ENCODE measurements at regions of chr9 and their contacts with region 1.

Region 1: DNA sequence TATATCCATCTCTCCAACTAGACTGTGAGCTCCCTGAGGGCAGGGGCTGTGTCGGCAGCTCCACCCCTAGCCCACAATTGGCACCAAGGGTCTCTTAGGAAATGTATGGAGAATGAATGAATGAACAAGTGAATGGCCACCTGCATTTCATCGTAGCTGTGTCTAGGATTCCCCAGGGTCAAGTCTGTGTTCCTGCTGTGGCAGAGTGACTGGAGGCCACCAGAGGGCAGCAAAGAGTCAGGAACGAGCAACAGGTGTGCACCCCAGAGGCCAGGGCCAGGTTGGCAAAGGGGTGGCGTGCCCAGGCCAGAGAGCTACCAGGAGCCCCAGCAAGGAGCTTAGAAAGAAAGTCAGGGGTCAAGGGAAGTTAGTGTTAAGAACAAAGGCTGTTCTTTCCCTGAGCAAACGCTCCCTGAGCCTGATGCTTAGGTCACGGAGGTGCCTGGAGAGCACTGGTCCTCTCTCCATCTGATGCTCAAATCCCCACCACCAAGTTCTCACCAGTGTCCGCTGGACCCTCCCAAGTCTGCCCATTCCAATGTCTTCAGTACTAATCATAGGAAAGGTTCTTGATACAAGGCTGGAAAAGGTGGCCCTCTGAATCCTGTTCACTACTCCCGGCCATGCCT is 160.7 kb downstream of the PAX5 start:
- DNase-seq: peak; percentile 84
- CTCF ChIP-seq: peak; percentile 93

Region 2: GRCh38 chr9:36676778-36677485 is 196.4 kb before region 1 on chr9:
- CTCF ChIA-PET with region 1: no interaction called
- POLR2A ChIA-PET with region 1: no interaction called
- DNase-seq: no peak
- CTCF ChIP-seq: no peak

Region 3: GRCh38 chr9:36855448-36856315 is 17.7 kb before region 1 on chr9:
- CTCF ChIA-PET with region 1: interaction called, 64 read pairs
- POLR2A ChIA-PET with region 1: no interaction called
- DNase-seq: peak; percentile 67
- CTCF ChIP-seq: peak; percentile 17

Region 4: GRCh38 chr9:36888551-36888950 is 15.2 kb after region 1 on chr9:
- CTCF ChIA-PET with region 1: interaction called, 29 read pairs
- POLR2A ChIA-PET with region 1: no interaction called
- DNase-seq: no peak
- CTCF ChIP-seq: no peak

Region 5: GRCh38 chr9:36937346-36937745 is 64.0 kb after region 1 on chr9:
- CTCF ChIA-PET with region 1: interaction called, 11 read pairs
- POLR2A ChIA-PET with region 1: no interaction called
- DNase-seq: no peak
- CTCF ChIP-seq: no peak

Region 6: GRCh38 chr9:36969216-36969771 is 95.9 kb after region 1 on chr9:
- CTCF ChIA-PET with region 1: interaction called, 10 read pairs
- POLR2A ChIA-PET with region 1: no interaction called
- DNase-seq: no peak
- CTCF ChIP-seq: no peak

Region 7: DNA sequence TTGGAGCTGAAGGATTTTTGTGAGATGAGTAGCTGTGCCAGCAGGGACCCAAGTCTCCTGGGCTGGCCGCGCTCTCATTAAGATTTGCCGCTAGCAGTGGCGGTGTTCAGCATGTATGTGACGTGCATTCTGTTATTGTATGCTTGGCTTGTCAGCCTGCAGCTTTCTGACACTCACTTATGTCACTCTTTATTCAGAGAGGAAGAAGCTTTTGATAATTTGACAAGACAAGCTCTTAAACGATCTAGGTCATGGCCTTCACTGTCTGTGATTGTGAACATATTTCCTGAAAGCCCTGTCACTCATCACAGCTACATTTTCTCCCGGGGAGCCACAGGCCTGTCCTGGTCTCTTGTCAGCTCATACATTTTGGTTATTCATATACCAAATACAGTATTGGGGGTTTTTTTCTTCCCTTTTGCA is 450.9 kb after region 1 on chr9:
- CTCF ChIA-PET with region 1: interaction called, 25 read pairs
- POLR2A ChIA-PET with region 1: no interaction called
- DNase-seq: peak; percentile 29
- CTCF ChIP-seq: no peak

Region 8: DNA sequence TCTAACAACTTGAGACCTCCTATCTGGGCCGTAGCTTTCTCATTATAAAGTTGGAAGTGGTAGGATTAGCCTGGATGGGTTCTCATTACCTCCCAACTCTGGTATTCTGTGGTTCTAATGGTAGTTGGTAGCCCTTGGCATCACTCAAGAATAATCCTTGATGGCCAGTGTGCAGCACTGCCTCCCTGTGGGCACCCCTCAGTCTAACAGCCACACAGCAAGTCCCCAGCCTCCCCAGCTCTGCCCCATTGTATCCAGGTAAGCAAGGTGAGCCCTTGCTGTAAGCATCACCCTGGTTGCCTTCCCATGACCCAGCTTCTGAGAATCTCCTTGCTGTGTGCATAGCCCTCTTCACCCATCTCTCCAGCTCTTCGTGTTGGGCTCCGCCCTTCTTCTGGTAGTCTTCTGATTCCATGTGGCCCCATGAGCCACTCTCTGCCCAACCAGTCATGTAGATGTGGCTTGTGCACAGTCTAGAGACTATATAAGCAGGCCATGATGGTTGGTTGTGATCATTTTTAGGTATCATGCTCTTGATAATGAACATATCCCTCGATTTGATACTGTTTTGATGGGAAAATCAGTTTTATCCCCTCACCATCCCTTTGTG is 491.5 kb after region 1 on chr9:
- CTCF ChIA-PET with region 1: interaction called, 14 read pairs
- POLR2A ChIA-PET with region 1: no interaction called
- DNase-seq: no peak
- CTCF ChIP-seq: peak; percentile 31

Measured in GM10248 (cell line).